ENCODE measurements at regions of chr14 and their contacts with region 1.

Region 1: DNA sequence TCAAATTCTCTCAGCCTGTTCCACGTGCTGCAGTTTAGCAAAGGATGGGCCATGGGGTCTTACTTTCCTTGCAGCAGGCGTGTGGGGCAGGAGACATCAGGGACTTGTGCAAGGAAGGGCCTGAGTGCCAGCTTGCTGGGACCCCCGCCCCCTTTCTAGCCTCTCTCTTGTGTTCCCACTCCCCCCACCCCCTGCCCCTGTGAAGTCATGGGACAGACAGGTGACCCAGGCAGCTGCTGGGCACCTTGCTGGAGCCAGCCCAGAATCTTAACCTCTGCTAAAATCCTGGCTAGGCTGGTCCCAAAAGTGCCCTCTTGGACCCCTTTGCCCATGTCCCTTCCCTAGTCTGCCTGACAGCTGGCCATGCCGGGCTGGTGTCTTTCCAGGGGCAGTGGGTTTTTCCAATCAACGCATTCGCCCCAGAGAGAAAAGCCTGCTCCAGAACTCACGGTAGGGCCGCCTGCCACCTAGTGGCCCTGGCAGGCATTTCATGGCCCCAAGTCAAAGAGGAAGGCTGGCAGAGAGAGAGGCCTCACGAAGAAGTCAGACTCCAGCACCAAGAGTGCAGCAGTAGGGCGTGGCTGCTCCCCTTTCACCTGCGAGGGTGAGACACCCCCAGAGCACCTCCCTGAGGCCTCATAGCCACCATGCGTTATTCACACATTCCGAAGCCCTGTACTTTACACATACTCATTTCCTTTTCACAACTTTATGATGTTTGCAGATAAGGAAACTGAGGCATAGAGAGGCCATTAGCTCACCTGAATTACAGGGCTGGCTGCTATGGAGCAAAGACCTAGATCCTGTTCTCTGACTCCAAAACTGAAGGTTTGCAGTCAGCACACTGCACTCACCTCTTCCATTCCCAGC is 67.4 kb downstream of the LGMN start:
- DNase-seq: peak; percentile 93
- H3K4me3 Mint-ChIP-seq: no peak overlapping the region
- H3K27ac Mint-ChIP-seq: peak overlapping the region; percentile 48
- H3K4me1 Mint-ChIP-seq: peaks cover 29% of the 10 kb centered on the region
- H3K27me3 Mint-ChIP-seq: no peaks in the 10 kb centered on the region

Region 2: DNA sequence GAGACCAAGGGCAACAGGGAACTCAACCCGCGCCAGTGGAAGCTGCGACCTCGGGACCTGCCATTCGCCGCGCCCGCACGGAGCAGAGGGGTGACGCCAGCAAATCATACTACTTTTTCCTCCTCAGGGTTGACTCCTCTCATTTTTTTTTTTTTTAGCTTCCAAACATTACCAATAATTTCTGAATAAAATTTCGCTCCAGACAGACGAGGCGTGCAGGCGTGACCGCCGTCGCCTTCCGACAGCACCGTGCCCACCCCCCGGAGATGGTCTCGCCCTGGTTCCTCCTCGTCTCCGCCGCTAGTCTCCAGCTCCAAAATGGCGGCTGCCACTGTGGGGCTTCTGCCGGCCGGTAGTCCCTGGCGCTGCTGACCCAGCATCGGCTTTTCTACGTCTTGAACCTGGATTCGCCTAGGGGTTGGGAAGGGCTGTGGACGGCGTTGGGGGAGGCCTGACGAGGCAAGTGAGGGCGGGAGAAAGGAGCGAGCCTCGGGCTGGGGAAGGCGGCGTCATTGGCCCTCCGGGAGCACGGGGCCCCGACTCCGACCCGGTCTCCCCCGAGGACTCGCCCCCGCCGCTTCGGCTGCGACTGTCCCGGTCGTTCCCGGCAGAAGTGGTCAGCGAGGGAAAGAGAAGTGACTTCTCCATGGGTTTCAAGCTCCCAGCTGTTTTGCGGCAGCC is 559.2 kb before region 1 on chr14 and contains the starts of genes CPSF2 and NDUFB1:
- intact Hi-C with region 1: loop called (anchors 10 kb)
- DNase-seq: peak; percentile 96
- H3K4me3 Mint-ChIP-seq: peak within 1 kb of the TSS; percentile 98
- H3K27ac Mint-ChIP-seq: peak within 1 kb of the TSS; percentile 100
- H3K4me1 Mint-ChIP-seq: peaks cover 31% of the 10 kb centered on the region
- H3K27me3 Mint-ChIP-seq: no peaks in the 10 kb centered on the region
- total RNA-seq, gene CPSF2: 111 and 120 TPM in 2 replicates
- total RNA-seq, gene NDUFB1: 76.1 and 77.9 TPM in 2 replicates

Region 3: DNA sequence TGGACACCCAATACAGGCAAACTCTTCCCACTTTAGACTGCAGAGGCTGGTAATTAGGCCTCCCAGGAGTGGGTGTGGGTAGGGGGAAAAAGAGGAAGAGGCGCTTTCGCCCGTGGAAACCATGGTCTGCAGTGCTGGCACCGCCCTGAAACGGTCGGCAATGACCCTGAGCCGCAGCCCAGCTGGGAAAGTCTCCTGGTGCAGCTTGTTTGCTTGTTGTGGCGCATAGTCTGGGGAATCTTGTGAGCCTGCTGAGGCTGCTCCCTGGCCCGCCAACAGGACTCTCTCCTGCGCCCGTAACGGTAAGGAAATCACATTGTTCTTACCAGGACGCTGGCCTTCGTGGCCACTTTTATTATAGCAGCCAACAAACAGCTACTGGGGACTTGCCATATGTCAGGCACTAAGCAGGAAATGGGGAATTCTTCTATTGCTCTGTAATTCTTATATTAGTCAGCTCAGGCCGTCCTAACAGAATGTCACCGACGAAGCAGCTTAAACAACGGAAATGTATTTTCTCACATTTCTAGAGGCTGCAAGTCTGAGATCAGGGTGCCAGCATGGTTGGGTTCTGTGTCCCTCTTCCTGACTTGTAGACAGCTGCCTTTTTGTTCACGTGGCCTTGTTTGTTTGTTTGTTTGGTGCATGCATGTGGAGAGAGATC is 220.0 kb before region 1 on chr14:
- intact Hi-C with region 1: loop called (anchors 5 kb)
- DNase-seq: no peak
- H3K4me3 Mint-ChIP-seq: no peak overlapping the region
- H3K27ac Mint-ChIP-seq: peak overlapping the region; percentile 11
- H3K4me1 Mint-ChIP-seq: peaks cover 13% of the 10 kb centered on the region
- H3K27me3 Mint-ChIP-seq: peaks cover 3% of the 10 kb centered on the region

Region 4: GRCh38 chr14:92585981-92586937 is 94.8 kb before region 1 on chr14:
- intact Hi-C with region 1: loop called (anchors 1 kb)
- DNase-seq: peak; percentile 84
- H3K4me3 Mint-ChIP-seq: peak overlapping the region; percentile 69
- H3K27ac Mint-ChIP-seq: peak overlapping the region; percentile 87
- H3K4me1 Mint-ChIP-seq: peaks cover 67% of the 10 kb centered on the region
- H3K27me3 Mint-ChIP-seq: peaks cover 8% of the 10 kb centered on the region

Region 5: GRCh38 chr14:92651106-92651757 is 29.8 kb before region 1 on chr14:
- intact Hi-C with region 1: loop called (anchors 1 kb)
- DNase-seq: peak; percentile 94
- H3K4me3 Mint-ChIP-seq: peak overlapping the region; percentile 94
- H3K27ac Mint-ChIP-seq: peak overlapping the region; percentile 98
- H3K4me1 Mint-ChIP-seq: peaks cover 73% of the 10 kb centered on the region
- H3K27me3 Mint-ChIP-seq: no peaks in the 10 kb centered on the region

Measured in activated CD4-positive, alpha-beta T cell treated with anti-CD3 and anti-CD28 coated beads, Interleukin-2, amount 10 ng/mL, durations not matched to agents 24 days and 14 days (primary cell).